ENCODE measurements at regions of chr1 and their contacts with region 1.

Region 1: GRCh38 chr1:158095737-158096335 is 84.9 kb upstream of the CD1D start:
- DNase-seq: peak; percentile 57
- H3K4me3 Mint-ChIP-seq: no peak overlapping the region
- H3K27ac Mint-ChIP-seq: no peak overlapping the region
- H3K4me1 Mint-ChIP-seq: no peaks in the 10 kb centered on the region
- H3K27me3 Mint-ChIP-seq: no peaks in the 10 kb centered on the region

Region 2: GRCh38 chr1:158117854-158118704 is 22.2 kb after region 1 on chr1:
- CTCF ChIA-PET with region 1: interaction called, 38 read pairs
- intact Hi-C with region 1: loop called (anchors 1 kb)
- DNase-seq: peak; percentile 40
- H3K4me3 Mint-ChIP-seq: peak overlapping the region; percentile 16
- H3K27ac Mint-ChIP-seq: no peak overlapping the region
- H3K4me1 Mint-ChIP-seq: peaks cover 10% of the 10 kb centered on the region
- H3K27me3 Mint-ChIP-seq: peaks cover 51% of the 10 kb centered on the region

Region 3: DNA sequence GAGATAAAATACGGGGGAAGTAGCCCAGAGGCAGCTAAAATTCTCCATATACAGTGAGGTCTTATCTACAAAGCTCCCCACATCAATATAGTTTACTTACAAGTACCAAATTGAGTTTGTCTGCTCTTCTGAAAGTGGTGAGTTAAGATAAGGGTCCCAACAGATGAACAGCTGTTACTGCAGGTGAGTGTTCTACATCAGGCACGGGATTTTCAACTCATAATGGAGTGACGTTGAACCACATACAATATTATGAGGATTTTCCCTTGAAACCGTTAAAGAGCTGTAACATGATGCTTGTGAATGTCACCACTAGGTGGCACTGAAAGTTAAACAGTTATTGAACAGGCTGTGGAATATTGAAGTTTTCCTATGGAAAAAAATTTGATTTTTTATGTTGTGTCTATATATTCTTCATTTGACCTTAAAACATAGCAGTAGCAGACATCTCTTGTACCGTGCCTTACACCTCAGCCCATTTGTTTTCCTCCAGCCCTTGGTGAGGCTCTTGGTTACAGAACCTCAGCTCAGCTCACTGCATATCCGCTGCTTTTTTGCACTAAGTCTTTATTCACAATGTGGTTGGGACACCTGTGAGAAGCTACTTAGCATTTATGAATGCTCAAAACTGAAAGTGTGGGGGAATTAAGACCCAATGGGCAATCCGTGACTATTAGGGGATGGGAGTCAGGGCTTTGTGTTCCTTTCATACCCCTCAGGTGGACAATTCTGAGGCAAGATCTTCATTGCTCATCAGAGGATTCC is 108.0 kb after region 1 on chr1:
- CTCF ChIA-PET with region 1: no interaction called
- intact Hi-C with region 1: no loop called
- DNase-seq: peak; percentile 23
- H3K4me3 Mint-ChIP-seq: no peak overlapping the region
- H3K27ac Mint-ChIP-seq: no peak overlapping the region
- H3K4me1 Mint-ChIP-seq: peaks cover 4% of the 10 kb centered on the region
- H3K27me3 Mint-ChIP-seq: peaks cover 25% of the 10 kb centered on the region